CD4-positive, alpha-beta memory T cell (primary cell): ENCODE measurements at regions of chr3 and their contacts with region 1.

Region 1: DNA sequence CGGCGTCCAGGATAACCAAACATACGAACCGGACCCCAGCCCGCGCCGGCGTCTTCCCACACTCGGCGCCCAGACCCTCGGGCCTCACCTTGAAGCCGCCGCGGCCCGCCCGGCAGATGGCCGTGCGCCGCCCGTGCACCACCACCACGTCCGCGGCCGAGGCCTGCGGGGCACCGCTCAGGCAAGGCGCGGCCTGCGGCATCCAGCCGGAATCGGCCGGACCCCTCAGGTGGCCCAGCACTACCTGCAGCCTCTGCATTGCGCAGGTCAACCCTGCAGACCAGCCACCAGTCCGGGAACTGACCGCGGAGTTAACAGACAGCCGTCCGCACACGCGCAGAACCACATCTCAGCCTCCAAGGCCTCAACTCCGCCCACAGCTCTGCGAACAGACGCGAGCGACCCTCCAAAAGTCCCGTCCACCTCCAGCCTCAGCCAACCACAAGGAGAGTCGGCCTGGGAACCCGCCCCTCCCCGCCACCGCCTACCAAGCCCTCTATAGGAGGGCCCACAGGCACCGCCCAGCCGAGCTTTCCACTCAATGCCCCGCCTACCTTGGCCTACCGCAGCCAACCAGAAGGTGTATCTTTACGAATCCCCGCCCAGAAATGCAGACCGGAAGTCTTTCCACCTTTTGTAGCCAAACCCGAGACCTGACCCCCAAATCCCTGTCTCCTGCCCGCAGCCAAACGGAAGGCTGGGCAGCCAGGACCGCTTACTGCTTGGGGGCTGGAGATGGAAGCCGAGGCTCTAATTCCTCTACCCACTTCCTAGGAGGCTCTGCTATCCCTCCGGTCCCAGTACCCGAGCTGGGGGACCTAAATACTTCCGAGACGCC is at the start of gene ACAA1:
- DNase-seq: peak; percentile 92 to 98 (median 94)
- H3K4me3 ChIP-seq: peak within 1 kb of the TSS; percentile 92 to 95
- H3K4me3 Mint-ChIP-seq: peak within 1 kb of the TSS; percentile 92 to 100 (median 98)
- H3K27ac ChIP-seq: peak within 1 kb of the TSS; percentile 86
- H3K27ac Mint-ChIP-seq: peak within 1 kb of the TSS; percentile 88 to 100 (median 98)
- H3K4me1 ChIP-seq: peaks cover 78% of the 10 kb centered on the region
- H3K4me1 Mint-ChIP-seq: peaks cover 47 to 87% (median 68%) of the 10 kb centered on the region in 4 donors
- H3K27me3 ChIP-seq: no peaks in the 10 kb centered on the region
- H3K27me3 Mint-ChIP-seq: no peaks in the 10 kb centered on the region
- total RNA-seq, gene ACAA1: 78.7 to 82.8 TPM

Region 2: DNA sequence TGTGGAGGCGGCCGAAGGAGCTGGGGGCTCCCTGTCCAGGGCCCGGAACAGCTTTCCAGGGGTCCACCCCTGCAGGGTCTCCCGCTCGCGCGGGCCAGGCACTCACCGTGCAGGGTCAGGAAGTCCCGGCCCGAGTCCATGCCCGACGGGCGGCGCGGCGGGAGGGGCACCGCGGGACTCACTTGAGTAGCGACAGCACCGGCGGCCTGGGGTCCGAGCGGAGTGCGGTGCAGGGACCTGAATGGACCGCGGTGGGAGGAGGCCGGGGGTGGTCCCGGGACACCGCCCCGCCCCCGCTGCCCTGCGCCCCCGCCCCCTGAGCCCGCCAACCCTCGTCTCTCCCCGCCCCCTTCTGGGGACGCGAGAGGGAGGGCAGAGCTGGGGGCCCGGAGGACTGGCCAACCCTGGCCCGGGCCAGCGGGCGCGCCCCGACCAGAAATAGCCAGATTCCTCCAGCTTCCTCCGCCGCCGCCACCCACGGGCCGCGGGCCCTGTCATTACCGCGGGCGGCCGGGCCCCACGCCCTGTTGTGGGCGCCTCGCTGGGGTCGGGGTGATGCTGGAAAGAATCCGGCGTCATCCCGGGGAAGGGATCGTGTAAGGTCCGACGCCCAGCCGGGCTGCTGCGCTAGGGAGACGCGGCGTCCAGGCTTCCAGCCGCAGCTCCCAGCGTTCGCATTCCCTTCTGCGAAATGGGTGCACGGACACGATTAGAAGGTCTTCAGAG is 107.4 kb before region 1 on chr3 and contains the start of gene PLCD1:
- CTCF ChIA-PET with region 1: no interaction called
- POLR2A ChIA-PET with region 1: interaction called, 12 read pairs
- intact Hi-C with region 1: no loop called
- DNase-seq: peak; percentile 36 to 62 (median 45)
- H3K4me3 ChIP-seq: peak within 1 kb of the TSS; percentile 29 to 44
- H3K4me3 Mint-ChIP-seq: peak within 1 kb of the TSS; percentile 75 to 89 (median 83)
- H3K27ac ChIP-seq: peak within 1 kb of the TSS; percentile 21
- H3K27ac Mint-ChIP-seq: peak within 1 kb of the TSS; percentile 53 to 94 (median 89)
- H3K4me1 ChIP-seq: peaks cover 41% of the 10 kb centered on the region
- H3K4me1 Mint-ChIP-seq: peaks cover 27 to 57% (median 37%) of the 10 kb centered on the region in 4 donors
- H3K27me3 ChIP-seq: no peaks in the 10 kb centered on the region
- H3K27me3 Mint-ChIP-seq: no peaks in the 10 kb centered on the region
- total RNA-seq, gene PLCD1: 81.2 to 93.9 TPM

Region 3: GRCh38 chr3:38117748-38118420 is 19.1 kb before region 1 on chr3:
- CTCF ChIA-PET with region 1: interaction called, 12 read pairs
- POLR2A ChIA-PET with region 1: interaction called, 12 read pairs
- intact Hi-C with region 1: no loop called
- DNase-seq: peak; percentile 66 to 74 (median 70)
- H3K4me3 ChIP-seq: no peak overlapping the region
- H3K4me3 Mint-ChIP-seq: no peak overlapping the region
- H3K27ac ChIP-seq: no peak overlapping the region
- H3K27ac Mint-ChIP-seq: peak overlapping the region in 4 of 7 donors; percentile 25 to 86 (median 77)
- H3K4me1 ChIP-seq: no peaks in the 10 kb centered on the region
- H3K4me1 Mint-ChIP-seq: peaks cover 2 to 15% (median 6%) of the 10 kb centered on the region in 4 donors
- H3K27me3 ChIP-seq: no peaks in the 10 kb centered on the region
- H3K27me3 Mint-ChIP-seq: no peaks in the 10 kb centered on the region

Region 4: DNA sequence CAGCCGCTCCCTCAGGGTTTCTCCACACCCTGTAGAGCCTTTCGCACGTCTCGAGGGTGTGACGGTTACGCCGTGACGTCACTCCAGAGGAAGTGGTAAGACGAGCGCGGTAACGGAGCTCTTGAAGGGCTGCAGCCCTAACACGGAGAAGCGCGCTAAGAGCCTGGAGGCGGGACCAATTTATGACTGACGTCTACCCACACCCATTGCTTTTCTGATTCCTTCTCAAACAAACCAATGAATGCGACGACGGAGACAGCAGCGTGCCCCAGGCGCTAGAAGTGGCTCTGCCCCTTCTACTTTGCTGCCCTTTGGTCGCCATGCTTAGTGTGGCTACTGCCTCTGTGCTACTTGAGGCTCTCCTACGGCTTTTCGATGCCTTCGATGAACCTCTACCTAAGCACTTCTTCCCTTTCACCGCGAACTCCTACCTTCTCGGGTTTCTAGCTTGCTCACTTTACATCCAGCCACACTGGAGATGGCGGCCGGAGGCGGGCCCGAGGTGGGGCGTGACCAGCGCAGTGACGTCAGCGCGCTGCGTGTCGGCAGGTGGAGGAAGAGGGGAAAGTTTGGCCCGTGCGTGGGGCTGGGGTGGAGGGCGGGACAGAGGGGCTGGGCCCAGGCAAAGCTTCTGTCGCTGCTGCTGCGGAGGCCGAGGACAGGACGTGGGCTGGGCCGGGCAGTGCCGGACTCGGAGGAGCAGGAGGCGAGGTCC is 28.1 kb after region 1 on chr3 and contains the start of gene OXSR1:
- CTCF ChIA-PET with region 1: interaction called, 8 read pairs
- POLR2A ChIA-PET with region 1: interaction called, 255 read pairs
- intact Hi-C with region 1: loop called (anchors 1 kb)
- DNase-seq: peak; percentile 97 to 99 (median 99)
- H3K4me3 ChIP-seq: peak within 1 kb of the TSS; percentile 66 to 72
- H3K4me3 Mint-ChIP-seq: peak within 1 kb of the TSS; percentile 88 to 98 (median 94)
- H3K27ac ChIP-seq: peak within 1 kb of the TSS; percentile 95
- H3K27ac Mint-ChIP-seq: peak within 1 kb of the TSS; percentile 99 to 100 (median 100)
- H3K4me1 ChIP-seq: peaks cover 40% of the 10 kb centered on the region
- H3K4me1 Mint-ChIP-seq: peaks cover 31 to 52% (median 42%) of the 10 kb centered on the region in 4 donors
- H3K27me3 ChIP-seq: no peaks in the 10 kb centered on the region
- H3K27me3 Mint-ChIP-seq: no peaks in the 10 kb centered on the region
- total RNA-seq, gene OXSR1: 39.6 to 43.9 TPM

Region 5: DNA sequence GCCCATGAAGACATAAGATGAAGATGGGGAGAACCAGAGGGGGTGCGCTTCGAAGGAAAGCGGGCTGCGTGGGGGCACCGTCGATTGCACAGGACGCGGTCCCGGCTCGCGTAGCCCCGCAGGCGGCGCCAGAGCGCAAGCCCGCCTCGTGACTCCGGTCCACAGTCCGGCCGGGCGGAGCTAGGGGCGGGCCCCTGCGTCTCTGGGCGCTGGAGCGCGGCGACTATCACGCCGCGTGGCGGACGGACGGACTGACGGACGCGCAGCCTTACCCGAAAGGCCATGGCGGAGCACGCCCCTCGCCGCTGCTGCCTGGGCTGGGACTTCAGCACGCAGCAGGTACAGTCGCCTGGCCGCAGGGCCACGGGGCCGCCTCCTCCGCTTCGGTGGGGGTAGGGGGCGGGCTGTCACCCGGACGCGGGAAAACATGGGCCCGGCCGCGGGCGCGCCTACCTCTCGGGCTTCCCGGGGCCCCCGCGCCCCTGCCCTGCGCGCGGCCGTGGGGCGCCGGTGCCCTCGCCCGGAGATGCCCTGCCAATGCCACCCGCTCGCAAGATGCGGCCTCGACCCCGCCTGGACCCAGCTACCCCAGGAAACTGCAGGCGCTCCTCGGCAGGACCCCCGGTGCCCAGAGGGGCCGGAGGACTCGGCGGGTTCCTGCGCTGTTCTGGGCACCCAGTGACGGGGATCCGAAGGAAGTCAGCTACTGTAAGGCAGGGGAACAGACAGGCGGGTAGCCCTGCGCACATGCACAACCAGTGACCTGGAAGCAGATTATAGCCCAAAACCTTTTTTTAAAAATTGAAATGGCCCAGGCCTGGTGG is 209.8 kb after region 1 on chr3 and contains the start of gene XYLB:
- CTCF ChIA-PET with region 1: interaction called, 5 read pairs
- POLR2A ChIA-PET with region 1: no interaction called
- intact Hi-C with region 1: loop called (anchors 5 kb)
- DNase-seq: peak; percentile 54 to 75 (median 72)
- H3K4me3 ChIP-seq: peak within 1 kb of the TSS; percentile 11 to 57
- H3K4me3 Mint-ChIP-seq: peak within 1 kb of the TSS; percentile 80 to 89 (median 82)
- H3K27ac ChIP-seq: peak within 1 kb of the TSS; percentile 28
- H3K27ac Mint-ChIP-seq: peak within 1 kb of the TSS in 2 of 7 donors; percentile 31 to 62
- H3K4me1 ChIP-seq: peaks cover 17% of the 10 kb centered on the region
- H3K4me1 Mint-ChIP-seq: peaks cover 0 to 4% (median 3%) of the 10 kb centered on the region in 4 donors
- H3K27me3 ChIP-seq: no peaks in the 10 kb centered on the region
- H3K27me3 Mint-ChIP-seq: no peaks in the 10 kb centered on the region
- total RNA-seq, gene XYLB: 0.47 to 0.61 TPM

Region 6: GRCh38 chr3:38496131-38496910 is 359.3 kb after region 1 on chr3 and contains the start of gene EXOG:
- CTCF ChIA-PET with region 1: no interaction called
- POLR2A ChIA-PET with region 1: interaction called, 4 read pairs
- intact Hi-C with region 1: loop called (anchors 2 kb)
- DNase-seq: peak; percentile 86 to 93 (median 88)
- H3K4me3 ChIP-seq: peak within 1 kb of the TSS; percentile 58 to 87
- H3K4me3 Mint-ChIP-seq: peak within 1 kb of the TSS; percentile 89 to 99 (median 94)
- H3K27ac ChIP-seq: peak within 1 kb of the TSS; percentile 69
- H3K27ac Mint-ChIP-seq: peak within 1 kb of the TSS; percentile 77 to 93 (median 91)
- H3K4me1 ChIP-seq: peaks cover 15% of the 10 kb centered on the region
- H3K4me1 Mint-ChIP-seq: peaks cover 13 to 29% (median 16%) of the 10 kb centered on the region in 4 donors
- H3K27me3 ChIP-seq: no peaks in the 10 kb centered on the region
- H3K27me3 Mint-ChIP-seq: no peaks in the 10 kb centered on the region
- total RNA-seq, gene EXOG: 29.3 to 33.3 TPM